Ovary (tissue), 10 donors: ENCODE measurements at regions of chr1 and their contacts with region 1.

Region 1: GRCh38 chr1:211680752-211681327 is 5.4 kb upstream of the NEK2 start:
- DNase-seq: peak; percentile 50 to 71 (median 63)
- H3K4me3 ChIP-seq: no peak overlapping the region
- H3K27ac ChIP-seq: no peak overlapping the region
- H3K4me1 ChIP-seq: peaks cover 2% of the 10 kb centered on the region
- H3K27me3 ChIP-seq: no peaks in the 10 kb centered on the region
- CTCF ChIP-seq: peak in 2 of 3 donors; percentile 67 to 72
- EP300 ChIP-seq: no peak
- POLR2A ChIP-seq: no peak

Region 2: DNA sequence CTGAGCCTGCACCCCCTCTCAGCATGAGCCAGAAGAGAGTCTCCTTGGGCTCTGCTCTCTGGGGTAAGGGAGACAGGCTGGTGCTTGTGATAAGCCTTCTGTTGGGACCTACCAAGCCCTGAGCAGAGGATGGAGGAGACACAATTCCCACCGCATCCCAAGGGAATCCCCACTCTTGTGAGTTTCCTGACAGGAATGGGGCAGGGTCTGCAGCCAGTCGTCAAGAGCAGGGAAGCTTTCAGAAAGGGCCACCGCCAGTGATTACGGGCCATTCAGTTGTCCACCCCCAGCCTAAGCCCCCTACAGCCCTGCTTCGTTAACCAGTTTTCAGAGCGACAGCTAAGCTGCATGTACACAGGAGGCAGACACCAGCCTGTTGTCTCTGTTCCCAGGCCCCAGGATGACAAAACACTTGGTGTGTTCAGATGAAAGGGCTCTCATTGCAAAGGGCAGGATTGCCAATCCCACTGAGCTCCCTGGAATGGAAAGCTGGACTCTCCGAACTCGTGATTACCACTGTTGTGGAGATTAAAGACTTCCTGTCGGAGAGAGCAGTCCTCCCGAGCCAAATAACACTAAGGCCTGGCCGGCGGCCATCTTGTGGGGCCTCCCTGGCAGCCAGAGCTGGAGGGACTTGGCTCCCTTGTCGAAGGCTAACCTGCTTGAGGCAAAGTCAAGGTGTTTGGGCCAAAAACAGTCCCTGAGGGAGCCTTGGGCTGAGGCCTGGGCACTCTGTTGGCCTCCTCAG is 64.4 kb before region 1 on chr1:
- intact Hi-C with region 1: no loop called
- DNase-seq: peak; percentile 67 to 85 (median 77)
- H3K4me3 ChIP-seq: no peak overlapping the region
- H3K27ac ChIP-seq: peak overlapping the region in 1 of 2 donors; percentile 41
- H3K4me1 ChIP-seq: peaks cover 3% of the 10 kb centered on the region
- H3K27me3 ChIP-seq: no peaks in the 10 kb centered on the region
- CTCF ChIP-seq: no peak
- EP300 ChIP-seq: no peak
- POLR2A ChIP-seq: no peak

Region 3: DNA sequence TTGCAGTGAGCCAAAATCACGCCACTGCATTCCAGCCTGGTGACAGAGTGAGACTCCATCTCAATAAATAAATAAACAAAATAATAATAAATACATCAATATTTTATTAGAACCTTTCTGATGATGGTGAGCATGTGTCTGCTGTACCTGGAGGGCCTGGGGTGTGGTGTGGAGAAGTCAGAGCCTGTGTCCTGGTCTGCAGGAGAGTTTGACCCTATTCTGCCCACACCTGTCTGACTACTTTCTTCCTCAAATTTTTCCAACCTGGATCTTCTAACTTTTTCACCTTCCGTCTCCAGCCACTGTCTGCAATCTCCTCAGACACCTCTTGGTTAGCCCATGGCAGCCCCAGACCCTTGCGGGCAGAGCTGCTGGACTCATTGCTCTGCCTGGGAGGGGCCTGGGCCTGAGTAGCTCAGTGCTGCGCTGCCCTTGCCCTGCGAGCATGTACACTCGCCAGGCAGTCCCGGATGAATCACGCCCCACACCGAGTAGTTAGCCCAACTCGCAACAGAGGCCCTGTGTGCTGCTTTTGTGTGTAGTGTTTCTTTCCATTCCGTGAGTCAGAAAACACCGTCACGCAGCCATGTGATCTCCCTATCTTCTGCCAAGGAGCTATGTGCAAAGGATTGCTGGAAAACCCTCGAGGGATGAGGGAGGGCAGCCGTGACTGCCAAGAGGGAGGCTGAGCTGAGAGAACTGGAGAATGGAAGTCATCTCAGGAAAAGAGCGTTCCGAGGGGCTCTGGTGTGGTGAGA is 789.0 kb after region 1 on chr1:
- intact Hi-C with region 1: loop called in 1 of 4 experiments (anchors 10 kb)
- DNase-seq: peak; percentile 79 to 91 (median 84)
- H3K4me3 ChIP-seq: no peak overlapping the region
- H3K27ac ChIP-seq: peak overlapping the region; percentile 57 to 71
- H3K4me1 ChIP-seq: peaks cover 4% of the 10 kb centered on the region
- H3K27me3 ChIP-seq: no peaks in the 10 kb centered on the region
- CTCF ChIP-seq: no peak
- EP300 ChIP-seq: peak; percentile 54
- POLR2A ChIP-seq: no peak